Heart right ventricle (tissue), 16 donors: ENCODE measurements at regions of chr6 and their contacts with region 1.

Region 1: DNA sequence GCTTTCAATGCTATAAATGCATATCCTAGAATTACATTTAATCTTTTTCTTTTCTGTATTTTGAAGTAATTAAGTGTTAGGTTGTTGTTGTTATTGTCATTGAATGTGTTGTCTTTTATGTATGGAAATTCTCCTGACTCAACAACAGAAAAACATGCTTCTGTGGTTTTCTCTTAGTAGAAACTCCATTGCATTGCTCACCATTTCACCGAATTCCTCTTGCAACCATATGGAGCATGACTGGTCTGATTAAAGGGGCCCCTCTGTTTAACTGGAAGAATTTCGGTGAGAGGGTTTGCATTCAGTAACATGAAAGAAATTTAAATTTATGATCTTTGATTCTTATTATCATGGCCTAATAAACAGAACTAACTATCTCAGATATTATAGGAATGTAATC is 454.3 kb upstream of the JARID2 start:
- DNase-seq: no peak
- ATAC-seq: no peak
- H3K4me3 ChIP-seq: no peak overlapping the region
- H3K27ac ChIP-seq: no peak overlapping the region
- H3K4me1 ChIP-seq: no peaks in the 10 kb centered on the region
- H3K27me3 ChIP-seq: no peaks in the 10 kb centered on the region
- CTCF ChIP-seq: no peak

Region 2: GRCh38 chr6:14775528-14775927 is 16.0 kb before region 1 on chr6:
- intact Hi-C with region 1: loop called in 1 of 10 experiments (anchors 2 kb)
- DNase-seq: no peak
- ATAC-seq: no peak
- H3K4me3 ChIP-seq: no peak overlapping the region
- H3K27ac ChIP-seq: no peak overlapping the region
- H3K4me1 ChIP-seq: peaks cover 0 to 11% (median 4%) of the 10 kb centered on the region in 9 donors
- H3K27me3 ChIP-seq: no peaks in the 10 kb centered on the region
- CTCF ChIP-seq: no peak